Caco-2 (cell line): ENCODE measurements at regions of chr19 and their contacts with region 1.

Region 1: GRCh38 chr19:45817010-45817724 is 2.1 kb upstream of the RSPH6A start:
- DNase-seq: peak; percentile 96 to 98
- H3K4me3 ChIP-seq: no peak overlapping the region
- H3K4me3 Mint-ChIP-seq: no peak overlapping the region
- H3K27ac Mint-ChIP-seq: no peak overlapping the region
- H3K4me1 ChIP-seq: peaks cover 6% of the 10 kb centered on the region; the same call in 1 of the 2 replicates
- H3K4me1 Mint-ChIP-seq: peaks cover 14% of the 10 kb centered on the region
- H3K27me3 ChIP-seq: no peaks in the 10 kb centered on the region
- H3K27me3 Mint-ChIP-seq: no peaks in the 10 kb centered on the region
- CTCF ChIP-seq: peak; percentile 97 to 99

Region 2: GRCh38 chr19:45753546-45753945 is 63.6 kb before region 1 on chr19:
- CTCF ChIA-PET with region 1: no interaction called
- POLR2A ChIA-PET with region 1: no interaction called
- intact Hi-C with region 1: no loop called
- DNase-seq: no peak
- H3K4me3 ChIP-seq: no peak overlapping the region
- H3K4me3 Mint-ChIP-seq: no peak overlapping the region
- H3K27ac Mint-ChIP-seq: no peak overlapping the region
- H3K4me1 ChIP-seq: no peaks in the 10 kb centered on the region
- H3K4me1 Mint-ChIP-seq: no peaks in the 10 kb centered on the region
- H3K27me3 ChIP-seq: no peaks in the 10 kb centered on the region
- H3K27me3 Mint-ChIP-seq: no peaks in the 10 kb centered on the region
- CTCF ChIP-seq: peak in 1 of 2 experiments; percentile 10

Region 3: DNA sequence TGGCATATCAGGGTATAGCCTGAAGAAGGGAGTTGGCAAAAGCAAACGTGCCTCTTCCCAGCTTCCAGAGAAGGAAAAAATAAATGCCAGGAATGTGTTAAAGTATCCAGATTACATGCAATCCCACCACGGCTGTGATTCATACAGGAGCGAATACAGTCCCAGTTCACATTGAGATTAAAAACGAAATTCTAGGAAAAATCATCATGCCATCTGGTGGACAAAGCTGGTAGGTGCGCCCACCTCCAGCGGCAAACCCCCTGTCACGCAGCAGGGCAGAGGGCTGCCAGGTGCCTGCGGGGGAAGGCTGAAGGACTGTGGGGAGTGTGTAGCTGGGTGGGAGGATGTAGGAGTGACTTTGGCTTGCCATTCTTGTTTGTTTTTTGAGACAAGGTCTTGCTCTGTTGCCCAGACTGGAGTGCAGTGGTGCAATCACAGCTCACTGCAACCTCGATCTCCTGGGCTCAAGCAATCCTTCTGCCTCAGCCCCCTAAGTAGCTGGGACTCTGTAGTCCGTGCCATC is 18.1 kb before region 1 on chr19:
- CTCF ChIA-PET with region 1: interaction called, 11 read pairs
- POLR2A ChIA-PET with region 1: no interaction called
- intact Hi-C with region 1: no loop called
- DNase-seq: peak in 1 of 2 experiments; percentile 79
- H3K4me3 ChIP-seq: no peak overlapping the region
- H3K4me3 Mint-ChIP-seq: peak overlapping the region; percentile 4
- H3K27ac Mint-ChIP-seq: no peak overlapping the region
- H3K4me1 ChIP-seq: no peaks in the 10 kb centered on the region
- H3K4me1 Mint-ChIP-seq: peaks cover 6% of the 10 kb centered on the region
- H3K27me3 ChIP-seq: no peaks in the 10 kb centered on the region
- H3K27me3 Mint-ChIP-seq: no peaks in the 10 kb centered on the region
- CTCF ChIP-seq: peak; percentile 76 to 85

Region 4: DNA sequence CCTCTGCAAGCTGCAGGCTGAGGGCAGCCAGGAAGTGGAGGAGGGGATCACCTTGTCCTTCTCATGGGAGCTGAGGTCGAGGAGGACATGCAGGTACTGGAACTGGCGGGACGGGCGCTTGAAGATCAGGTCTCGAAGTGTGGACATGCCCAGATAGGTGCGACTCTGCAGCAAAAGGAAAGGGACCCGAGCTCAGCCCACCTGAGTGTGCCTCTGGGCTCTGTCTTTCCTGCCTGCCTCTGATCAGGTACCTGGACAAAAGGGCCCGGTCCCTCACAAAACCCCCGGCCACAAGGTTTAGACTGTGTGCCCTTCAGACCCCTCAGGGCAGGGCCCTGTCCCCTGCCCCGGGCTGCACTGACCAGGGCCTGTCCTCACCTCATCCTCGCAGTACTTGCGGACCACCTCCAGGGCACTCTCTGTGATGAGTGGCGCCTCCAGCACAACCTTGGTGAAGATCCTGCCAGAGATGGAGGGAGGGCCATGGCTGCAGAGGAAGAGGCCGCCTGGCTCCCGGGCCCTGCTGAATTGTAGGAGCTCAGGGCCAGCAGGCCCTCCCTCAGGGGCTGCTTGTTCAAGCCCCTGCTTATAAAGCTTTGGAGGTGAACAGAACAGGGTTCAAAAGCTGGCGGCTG is 10.4 kb after region 1 on chr19:
- CTCF ChIA-PET with region 1: interaction called, 14 read pairs
- POLR2A ChIA-PET with region 1: no interaction called
- intact Hi-C with region 1: no loop called
- DNase-seq: no peak
- H3K4me3 ChIP-seq: no peak overlapping the region
- H3K4me3 Mint-ChIP-seq: no peak overlapping the region
- H3K27ac Mint-ChIP-seq: no peak overlapping the region
- H3K4me1 ChIP-seq: no peaks in the 10 kb centered on the region
- H3K4me1 Mint-ChIP-seq: no peaks in the 10 kb centered on the region
- H3K27me3 ChIP-seq: no peaks in the 10 kb centered on the region
- H3K27me3 Mint-ChIP-seq: no peaks in the 10 kb centered on the region
- CTCF ChIP-seq: no peak

Region 5: GRCh38 chr19:45902651-45903625 is 85.8 kb after region 1 on chr19:
- CTCF ChIA-PET with region 1: interaction called, 12 read pairs
- POLR2A ChIA-PET with region 1: no interaction called
- intact Hi-C with region 1: no loop called
- DNase-seq: peak; percentile 98 to 100
- H3K4me3 ChIP-seq: peak overlapping the region; percentile 92
- H3K4me3 Mint-ChIP-seq: peak overlapping the region; percentile 80
- H3K27ac Mint-ChIP-seq: peak overlapping the region; percentile 65
- H3K4me1 ChIP-seq: peaks cover 5% of the 10 kb centered on the region
- H3K4me1 Mint-ChIP-seq: no peaks in the 10 kb centered on the region
- H3K27me3 ChIP-seq: no peaks in the 10 kb centered on the region
- H3K27me3 Mint-ChIP-seq: no peaks in the 10 kb centered on the region
- CTCF ChIP-seq: no peak

Region 6: DNA sequence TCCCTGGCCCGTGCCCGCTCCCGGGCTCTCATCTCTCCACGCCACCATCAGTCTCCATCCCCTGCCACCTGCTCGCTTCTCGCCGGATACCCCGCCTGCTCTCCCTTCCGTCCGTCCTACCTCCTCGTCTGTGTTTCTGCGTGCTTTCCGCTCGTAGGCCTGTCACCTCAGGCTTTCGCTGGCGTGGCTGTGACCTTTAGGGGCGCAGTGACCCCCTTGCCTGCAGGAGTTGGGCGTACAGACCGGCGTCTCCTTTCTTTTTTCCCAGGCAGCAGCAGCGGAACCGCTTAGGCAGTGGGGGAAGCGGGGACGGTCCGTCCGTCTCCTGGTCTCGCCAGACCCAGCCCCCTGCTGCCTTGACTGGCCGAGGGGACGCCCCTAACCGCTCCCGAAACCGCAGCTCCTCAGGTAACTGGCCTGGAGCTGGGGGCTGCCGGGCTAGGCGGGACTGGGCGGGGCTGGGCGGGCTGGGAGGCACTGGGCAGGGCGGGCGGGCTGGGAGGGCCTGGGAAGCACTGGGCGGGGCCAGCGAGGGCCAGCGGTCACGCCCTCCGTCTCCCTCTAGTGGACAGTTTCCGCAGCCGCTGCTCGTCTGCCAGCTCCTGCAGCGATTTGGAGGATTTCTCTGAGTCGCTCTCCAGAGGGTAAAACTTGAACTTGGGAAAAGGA is 199.4 kb after region 1 on chr19:
- CTCF ChIA-PET with region 1: interaction called, 4 read pairs
- POLR2A ChIA-PET with region 1: no interaction called
- intact Hi-C with region 1: loop called (anchors 10 kb)
- DNase-seq: peak; percentile 78 to 91
- H3K4me3 ChIP-seq: peak overlapping the region; percentile 57
- H3K4me3 Mint-ChIP-seq: peak overlapping the region; percentile 86
- H3K27ac Mint-ChIP-seq: no peak overlapping the region
- H3K4me1 ChIP-seq: peaks cover 20% of the 10 kb centered on the region
- H3K4me1 Mint-ChIP-seq: peaks cover 21% of the 10 kb centered on the region
- H3K27me3 ChIP-seq: no peaks in the 10 kb centered on the region; the same call in 1 of the 2 replicates
- H3K27me3 Mint-ChIP-seq: peaks cover 8% of the 10 kb centered on the region
- CTCF ChIP-seq: peak; percentile 93 to 95

Region 7: GRCh38 chr19:46049597-46049996 is 232.4 kb after region 1 on chr19:
- CTCF ChIA-PET with region 1: no interaction called
- POLR2A ChIA-PET with region 1: no interaction called
- intact Hi-C with region 1: no loop called
- DNase-seq: peak in 1 of 2 experiments; percentile 38
- H3K4me3 ChIP-seq: no peak overlapping the region
- H3K4me3 Mint-ChIP-seq: no peak overlapping the region
- H3K27ac Mint-ChIP-seq: no peak overlapping the region
- H3K4me1 ChIP-seq: no peaks in the 10 kb centered on the region
- H3K4me1 Mint-ChIP-seq: no peaks in the 10 kb centered on the region
- H3K27me3 ChIP-seq: no peaks in the 10 kb centered on the region
- H3K27me3 Mint-ChIP-seq: no peaks in the 10 kb centered on the region
- CTCF ChIP-seq: peak; percentile 27 to 31